ENCODE measurements at regions of chr3 and their contacts with region 1.

Region 1: GRCh38 chr3:105674437-105675065 is 194.3 kb downstream of the CBLB start:
- DNase-seq: no peak
- H3K4me3 ChIP-seq: no peak overlapping the region
- H3K27ac ChIP-seq: no peak overlapping the region
- H3K4me1 ChIP-seq: no peaks in the 10 kb centered on the region
- H3K27me3 ChIP-seq: no peaks in the 10 kb centered on the region
- CTCF ChIP-seq: no peak
- POLR2A ChIP-seq: no peak

Region 2: DNA sequence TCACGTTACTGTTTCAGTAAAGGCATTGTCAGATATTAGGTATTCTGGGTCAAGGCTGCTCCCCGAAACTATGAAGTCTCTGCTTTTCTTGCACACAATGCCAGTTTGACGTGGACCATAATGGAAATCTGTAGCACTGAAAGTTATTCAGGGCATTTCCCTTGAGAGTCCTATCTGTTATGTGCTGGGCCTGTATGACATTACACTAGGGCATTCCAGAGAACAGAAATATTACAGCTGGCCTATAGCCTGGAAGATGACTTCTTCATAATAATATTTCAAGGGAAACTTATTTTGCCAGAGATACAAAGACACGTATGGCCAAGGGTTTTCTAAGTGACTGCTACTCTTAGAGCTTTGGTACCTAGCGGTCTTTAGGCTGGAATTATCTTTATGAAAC is 807.9 kb after region 1 on chr3:
- intact Hi-C with region 1: loop called (anchors 2 kb)
- DNase-seq: no peak
- H3K4me3 ChIP-seq: no peak overlapping the region
- H3K27ac ChIP-seq: no peak overlapping the region
- H3K4me1 ChIP-seq: no peaks in the 10 kb centered on the region
- H3K27me3 ChIP-seq: no peaks in the 10 kb centered on the region
- CTCF ChIP-seq: no peak
- POLR2A ChIP-seq: no peak

Measured in breast epithelium (tissue), 4 donors.